ENCODE measurements at regions of chr1 and their contacts with region 1.

Region 1: DNA sequence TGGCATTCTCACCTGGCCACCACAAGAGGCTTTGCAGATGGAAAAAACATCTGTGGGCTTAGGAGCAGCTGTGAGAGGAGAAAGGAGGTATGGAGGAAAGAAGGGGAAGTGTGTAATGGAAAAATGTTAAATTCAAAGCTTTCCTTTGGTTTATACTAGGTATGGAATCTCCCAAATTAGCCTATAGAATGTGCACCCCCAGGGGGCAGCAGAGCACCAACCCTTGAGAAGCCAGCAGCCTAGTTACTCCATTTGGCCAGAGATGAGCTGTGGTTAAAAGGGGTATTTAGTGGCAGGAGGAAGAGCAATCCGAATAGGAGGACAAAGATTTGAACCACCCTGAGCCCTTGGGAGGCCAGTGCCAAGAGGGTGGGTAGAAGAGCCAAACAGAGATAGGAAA is 97.5 kb upstream of the CTTNBP2NL start:
- DNase-seq: peak; percentile 36 to 48
- H3K4me3 ChIP-seq: no peak overlapping the region
- H3K4me3 Mint-ChIP-seq: no peak overlapping the region
- H3K27ac Mint-ChIP-seq: no peak overlapping the region
- H3K4me1 ChIP-seq: no peaks in the 10 kb centered on the region
- H3K4me1 Mint-ChIP-seq: no peaks in the 10 kb centered on the region
- H3K27me3 ChIP-seq: no peaks in the 10 kb centered on the region
- H3K27me3 Mint-ChIP-seq: peaks cover 8% of the 10 kb centered on the region
- CTCF ChIP-seq: peak; percentile 44 to 59

Region 2: GRCh38 chr1:112230232-112230631 is 68.3 kb before region 1 on chr1:
- CTCF ChIA-PET with region 1: no interaction called
- POLR2A ChIA-PET with region 1: no interaction called
- intact Hi-C with region 1: no loop called
- DNase-seq: no peak
- H3K4me3 ChIP-seq: no peak overlapping the region
- H3K4me3 Mint-ChIP-seq: no peak overlapping the region
- H3K27ac Mint-ChIP-seq: no peak overlapping the region
- H3K4me1 ChIP-seq: no peaks in the 10 kb centered on the region
- H3K4me1 Mint-ChIP-seq: no peaks in the 10 kb centered on the region
- H3K27me3 ChIP-seq: no peaks in the 10 kb centered on the region
- H3K27me3 Mint-ChIP-seq: peaks cover 12% of the 10 kb centered on the region
- CTCF ChIP-seq: no peak

Region 3: DNA sequence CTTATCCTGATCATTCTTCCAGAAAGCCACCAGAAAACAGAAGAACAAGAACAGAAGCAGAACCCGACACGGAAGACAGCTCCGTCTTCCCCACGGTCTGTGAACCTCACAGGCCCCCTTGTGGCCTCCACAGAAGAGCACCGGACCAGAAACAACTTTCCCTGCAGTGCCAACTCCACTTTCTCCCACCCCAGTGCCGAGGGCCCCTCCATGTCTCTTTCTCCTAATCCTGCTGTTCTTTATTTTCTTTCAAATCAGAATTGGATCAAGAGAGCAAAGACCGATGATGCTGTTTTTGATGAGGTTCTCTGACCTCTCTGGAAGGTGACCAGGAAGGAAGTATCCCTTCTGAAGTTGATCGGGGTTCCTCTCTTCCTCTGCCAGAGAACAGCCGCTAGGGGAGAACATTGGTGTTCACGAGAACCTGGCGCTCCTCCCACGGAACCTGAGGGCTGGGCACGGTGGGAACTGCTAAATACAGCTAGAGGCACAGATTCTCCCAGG is 38.5 kb after region 1 on chr1:
- CTCF ChIA-PET with region 1: interaction called, 12 read pairs
- POLR2A ChIA-PET with region 1: no interaction called
- intact Hi-C with region 1: loop called (anchors 5 kb)
- DNase-seq: peak in 1 of 2 experiments; percentile 29
- H3K4me3 ChIP-seq: no peak overlapping the region
- H3K4me3 Mint-ChIP-seq: no peak overlapping the region
- H3K27ac Mint-ChIP-seq: no peak overlapping the region
- H3K4me1 ChIP-seq: no peaks in the 10 kb centered on the region
- H3K4me1 Mint-ChIP-seq: no peaks in the 10 kb centered on the region
- H3K27me3 ChIP-seq: no peaks in the 10 kb centered on the region; the same call in none of the 2 replicates
- H3K27me3 Mint-ChIP-seq: peaks cover 29% of the 10 kb centered on the region
- CTCF ChIP-seq: peak; percentile 26 to 59

Region 4: DNA sequence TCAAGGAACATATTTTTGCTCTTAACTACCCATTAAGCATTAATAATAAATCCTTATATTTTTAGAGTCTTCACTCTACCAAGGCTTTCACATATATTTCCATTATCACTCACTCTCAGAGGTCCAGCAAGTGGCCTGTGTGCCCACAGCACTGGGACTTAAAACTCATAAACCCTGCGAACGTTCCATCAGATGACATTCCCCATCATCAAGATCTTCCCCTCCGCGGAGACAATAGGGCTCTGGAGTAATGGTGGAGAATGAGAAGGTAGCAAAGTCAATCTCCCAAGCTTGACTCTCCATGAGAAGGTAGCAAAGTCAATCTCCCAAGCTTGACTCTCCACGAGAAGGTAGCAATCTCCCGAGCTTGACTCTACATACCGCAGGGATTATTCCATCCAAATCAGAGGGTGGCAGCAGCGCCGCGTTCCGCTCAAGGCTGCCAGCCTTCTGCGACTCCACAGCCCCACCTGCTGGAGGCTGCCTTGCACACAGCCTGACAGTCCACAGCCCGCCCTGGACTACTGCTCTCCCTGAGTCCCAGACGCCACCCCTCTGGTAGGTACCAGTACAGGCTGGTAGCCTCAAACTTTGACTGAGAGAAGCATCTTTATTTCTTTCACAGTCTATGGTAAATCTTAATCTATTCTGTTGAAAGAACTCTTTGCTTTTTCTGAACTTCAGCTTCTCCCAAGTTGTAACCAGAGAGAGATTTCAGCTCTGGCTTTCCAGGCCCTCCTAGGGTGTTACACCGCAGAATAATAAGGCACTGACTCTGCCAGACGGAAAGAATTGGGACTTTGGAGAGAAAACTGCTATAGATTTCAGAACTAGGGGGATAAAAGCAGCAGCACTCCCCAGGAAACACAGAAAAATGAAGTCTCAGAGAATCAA is 71.1 kb after region 1 on chr1:
- CTCF ChIA-PET with region 1: interaction called, 5 read pairs
- POLR2A ChIA-PET with region 1: no interaction called
- intact Hi-C with region 1: loop called (anchors 2 kb)
- DNase-seq: peak; percentile 78 to 87
- H3K4me3 ChIP-seq: no peak overlapping the region
- H3K4me3 Mint-ChIP-seq: no peak overlapping the region
- H3K27ac Mint-ChIP-seq: no peak overlapping the region
- H3K4me1 ChIP-seq: no peaks in the 10 kb centered on the region
- H3K4me1 Mint-ChIP-seq: no peaks in the 10 kb centered on the region
- H3K27me3 ChIP-seq: no peaks in the 10 kb centered on the region; the same call in 1 of the 2 replicates
- H3K27me3 Mint-ChIP-seq: peaks cover 19% of the 10 kb centered on the region
- CTCF ChIP-seq: peak; percentile 83 to 91